ENCODE measurements at regions of chr17 and their contacts with region 1.

Region 1: GRCh38 chr17:48074315-48075081 is 26.3 kb downstream of the NFE2L1 start:
- DNase-seq: peak; percentile 86
- H3K4me3 ChIP-seq: no peak overlapping the region
- H3K27ac ChIP-seq: peak overlapping the region; percentile 79 to 93 (median 91)
- H3K4me1 ChIP-seq: peaks cover 43 to 51% of the 10 kb centered on the region in 2 donors
- H3K27me3 ChIP-seq: no peaks in the 10 kb centered on the region
- CTCF ChIP-seq: peak; percentile 61 to 97 (median 84)
- POLR2A ChIP-seq: peak in 1 of 2 donors; percentile 39

Region 2: DNA sequence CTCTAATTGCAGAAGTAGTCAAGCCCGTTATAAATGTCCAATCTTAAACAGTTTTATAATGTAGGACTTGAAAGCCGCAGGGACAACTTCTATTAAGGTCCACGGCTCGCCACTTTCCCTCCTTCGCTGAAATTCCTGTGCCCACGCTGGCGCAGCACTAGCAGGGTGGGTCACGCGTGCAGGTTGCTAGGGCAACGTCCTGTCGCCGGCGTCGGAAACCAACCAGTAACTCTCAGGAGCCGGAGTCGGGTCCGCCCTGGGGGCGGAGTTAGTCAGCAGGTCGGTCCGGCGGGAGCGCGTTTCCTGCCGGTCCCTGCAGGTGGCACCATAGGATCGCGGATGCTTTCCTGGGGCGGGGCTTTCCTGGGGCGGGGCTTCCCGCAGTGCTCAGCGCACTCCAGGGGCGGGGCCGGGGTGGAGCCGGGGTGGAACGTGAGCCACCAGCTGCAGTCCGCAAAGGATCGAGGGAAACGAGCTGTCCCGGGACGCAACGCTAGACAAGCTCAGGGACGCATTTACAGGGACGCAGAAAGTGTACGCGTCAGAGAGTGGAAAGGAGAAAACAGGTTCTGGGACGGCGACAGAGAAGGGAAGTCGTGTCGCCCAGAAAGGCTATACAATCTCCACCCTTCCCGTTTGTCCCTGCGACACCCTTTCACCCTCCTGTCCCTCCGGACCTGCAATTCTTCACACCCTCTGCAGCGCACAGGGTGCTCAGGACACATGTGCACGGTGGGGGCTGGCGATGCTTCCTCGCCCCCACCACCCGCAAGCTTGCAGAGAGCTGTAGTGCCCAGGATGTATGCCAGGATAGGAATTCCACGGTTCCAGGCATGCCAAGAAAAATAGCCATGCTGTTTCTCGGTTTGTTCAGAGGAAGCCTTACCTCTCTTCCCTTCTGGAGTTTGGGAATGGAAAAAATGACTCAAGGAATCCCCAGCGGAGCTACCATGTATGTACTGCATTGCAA is 49.3 kb before region 1 on chr17:
- intact Hi-C with region 1: loop called (anchors 5 kb)
- DNase-seq: peak; percentile 100
- H3K4me3 ChIP-seq: peak overlapping the region; percentile 1 to 39 (median 37)
- H3K27ac ChIP-seq: peak overlapping the region; percentile 86 to 92 (median 88)
- H3K4me1 ChIP-seq: peaks cover 27 to 33% of the 10 kb centered on the region in 2 donors
- H3K27me3 ChIP-seq: no peaks in the 10 kb centered on the region
- CTCF ChIP-seq: peak; percentile 43 to 96 (median 84)
- POLR2A ChIP-seq: peak in 1 of 2 donors; percentile 80

Region 3: GRCh38 chr17:48107168-48108132 is 33.0 kb after region 1 on chr17 and contains the start of gene SNX11:
- intact Hi-C with region 1: no loop called
- DNase-seq: peak; percentile 94 to 96
- H3K4me3 ChIP-seq: peak within 1 kb of the TSS; percentile 65 to 78 (median 75)
- H3K27ac ChIP-seq: peak within 1 kb of the TSS; percentile 73 to 98 (median 83)
- H3K4me1 ChIP-seq: peaks cover 16 to 30% of the 10 kb centered on the region in 2 donors
- H3K27me3 ChIP-seq: no peaks in the 10 kb centered on the region
- CTCF ChIP-seq: peak in 1 of 6 experiments; percentile 13
- POLR2A ChIP-seq: peak in 1 of 2 donors; percentile 75
- total RNA-seq, gene SNX11: 20.3 to 23.4 (median 22.0) TPM

Region 4: DNA sequence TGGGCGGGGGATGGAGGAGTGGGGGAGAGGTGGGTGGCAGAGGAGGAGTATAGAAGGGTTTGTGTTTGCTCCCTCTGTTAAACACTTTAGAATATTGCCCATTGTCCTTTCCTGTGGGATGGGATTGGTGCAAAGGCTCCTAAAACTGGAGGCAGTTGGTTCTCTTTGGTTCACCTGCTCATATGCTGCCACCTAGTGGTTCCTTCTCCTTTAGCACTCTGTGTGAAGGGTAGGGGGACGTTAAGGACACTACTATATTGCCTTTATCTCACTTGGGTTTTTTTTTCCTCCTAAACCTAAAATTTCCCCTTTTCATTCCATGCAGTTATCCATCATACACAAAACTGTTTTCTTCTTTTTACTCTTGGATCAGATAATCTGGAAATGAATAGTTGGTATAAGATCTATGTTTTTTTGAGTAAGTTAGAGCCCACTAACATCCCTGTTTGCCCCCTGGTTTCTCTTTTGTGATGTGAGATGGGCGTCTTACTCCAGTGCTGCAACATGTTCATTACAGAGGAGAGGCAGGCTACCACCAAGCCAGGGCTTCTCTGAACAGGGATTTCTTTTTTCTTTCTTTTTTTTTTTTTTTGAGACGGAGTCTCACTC is 56.8 kb after region 1 on chr17:
- intact Hi-C with region 1: no loop called
- DNase-seq: peak; percentile 56 to 59
- H3K4me3 ChIP-seq: no peak overlapping the region
- H3K27ac ChIP-seq: no peak overlapping the region
- H3K4me1 ChIP-seq: peaks cover 3 to 9% of the 10 kb centered on the region in 2 donors
- H3K27me3 ChIP-seq: no peaks in the 10 kb centered on the region
- CTCF ChIP-seq: peak; percentile 58 to 91 (median 82)
- POLR2A ChIP-seq: no peak

Measured in thyroid gland (tissue), 4 donors.